Caco-2 (cell line): ENCODE measurements at regions of chr21 and their contacts with region 1.

Region 1: DNA sequence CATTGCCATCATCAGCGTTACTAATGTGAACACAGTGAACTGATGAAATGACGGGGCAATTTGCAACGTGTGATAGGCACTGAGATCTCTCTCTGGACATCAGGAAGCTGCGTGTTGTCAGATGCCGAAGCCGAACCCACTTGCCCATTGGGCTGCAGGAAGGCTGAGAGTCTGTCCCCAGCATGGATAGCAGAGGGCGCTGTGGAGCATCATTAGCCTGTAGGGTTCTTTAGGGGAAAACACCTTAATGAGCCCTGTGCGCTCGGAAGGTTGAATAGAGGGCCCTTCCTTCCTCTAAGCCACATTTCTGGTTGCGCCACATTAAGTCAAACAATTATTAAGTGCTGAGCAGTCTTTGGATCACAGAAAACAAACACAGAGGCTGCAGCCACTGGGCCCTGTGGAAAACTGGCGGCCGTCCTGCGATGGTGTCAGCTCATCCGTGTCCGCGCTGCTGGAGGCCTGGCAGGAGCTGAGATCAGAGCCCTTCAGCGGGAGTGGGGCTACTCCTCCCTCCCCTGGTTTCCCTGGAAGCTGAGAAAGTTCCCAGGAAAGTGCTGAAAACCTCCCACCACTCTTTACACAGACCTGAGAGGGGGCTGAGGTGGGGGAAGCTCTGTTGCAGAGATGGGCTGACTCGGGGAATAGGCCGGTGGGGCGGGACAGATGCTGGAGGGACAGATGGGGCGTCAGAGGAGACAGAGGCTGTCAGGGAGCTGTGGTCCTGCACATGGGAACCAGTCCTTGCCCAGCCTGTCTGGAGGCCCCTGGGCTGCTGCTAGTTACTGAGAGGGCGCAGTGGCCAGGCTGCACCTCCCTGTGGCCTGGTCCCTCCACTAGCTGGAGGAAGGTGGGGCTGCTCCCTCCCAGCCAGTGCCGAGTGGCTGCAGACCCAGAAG is 12.7 kb downstream of the TFF2 start:
- DNase-seq: peak; percentile 81
- H3K4me3 ChIP-seq: no peak overlapping the region
- H3K4me3 Mint-ChIP-seq: no peak overlapping the region
- H3K27ac Mint-ChIP-seq: peak overlapping the region; percentile 81
- H3K4me1 ChIP-seq: peaks cover 5% of the 10 kb centered on the region; the same call in 1 of the 2 replicates
- H3K4me1 Mint-ChIP-seq: peaks cover 17% of the 10 kb centered on the region
- H3K27me3 ChIP-seq: no peaks in the 10 kb centered on the region
- H3K27me3 Mint-ChIP-seq: no peaks in the 10 kb centered on the region
- CTCF ChIP-seq: peak; percentile 62 to 73

Region 2: DNA sequence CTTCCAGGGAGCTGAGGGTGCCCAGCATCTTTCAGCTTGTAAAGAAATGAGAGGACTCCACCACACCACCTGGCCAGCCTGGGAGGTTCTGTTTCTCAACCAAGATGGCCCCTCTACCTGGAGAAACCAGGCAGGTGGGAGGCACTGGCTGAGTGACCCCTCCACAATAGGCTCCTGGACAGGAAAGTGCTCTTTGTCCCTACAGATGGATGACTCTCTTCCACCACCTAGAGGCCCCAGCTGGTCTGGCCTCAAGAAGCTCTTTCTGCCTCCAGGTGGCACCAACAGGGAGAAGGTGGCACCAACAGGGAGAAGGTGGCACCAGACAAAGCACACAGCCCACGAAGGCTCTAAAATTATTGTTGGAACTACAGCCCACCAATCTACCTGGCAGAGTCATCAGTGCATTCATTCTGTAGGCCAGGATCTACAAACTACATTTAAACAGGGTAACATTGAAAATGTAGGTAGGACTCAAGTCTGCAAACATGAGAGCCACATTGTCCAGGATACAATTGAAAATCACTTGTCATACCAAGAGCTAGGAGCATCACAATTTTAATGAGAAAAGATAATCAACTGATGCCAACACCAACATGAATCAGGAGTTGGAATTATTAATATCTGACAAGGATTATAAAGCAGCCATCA is 43.4 kb after region 1 on chr21:
- CTCF ChIA-PET with region 1: interaction called, 4 read pairs
- POLR2A ChIA-PET with region 1: no interaction called
- intact Hi-C with region 1: loop called (anchors 1 kb)
- DNase-seq: peak; percentile 63 to 64
- H3K4me3 ChIP-seq: no peak overlapping the region
- H3K4me3 Mint-ChIP-seq: no peak overlapping the region
- H3K27ac Mint-ChIP-seq: no peak overlapping the region
- H3K4me1 ChIP-seq: peaks cover 8% of the 10 kb centered on the region
- H3K4me1 Mint-ChIP-seq: peaks cover 16% of the 10 kb centered on the region
- H3K27me3 ChIP-seq: no peaks in the 10 kb centered on the region
- H3K27me3 Mint-ChIP-seq: no peaks in the 10 kb centered on the region
- CTCF ChIP-seq: peak; percentile 77 to 94

Region 3: GRCh38 chr21:42474043-42474831 is 136.2 kb after region 1 on chr21:
- CTCF ChIA-PET with region 1: no interaction called
- POLR2A ChIA-PET with region 1: no interaction called
- intact Hi-C with region 1: no loop called
- DNase-seq: peak; percentile 58 to 81
- H3K4me3 ChIP-seq: no peak overlapping the region
- H3K4me3 Mint-ChIP-seq: no peak overlapping the region
- H3K27ac Mint-ChIP-seq: peak overlapping the region; percentile 62
- H3K4me1 ChIP-seq: peaks cover 19% of the 10 kb centered on the region
- H3K4me1 Mint-ChIP-seq: peaks cover 13% of the 10 kb centered on the region
- H3K27me3 ChIP-seq: no peaks in the 10 kb centered on the region
- H3K27me3 Mint-ChIP-seq: no peaks in the 10 kb centered on the region
- CTCF ChIP-seq: no peak